MCF 10A (cell line): ENCODE measurements at regions of chr11 and their contacts with region 1.

Region 1: DNA sequence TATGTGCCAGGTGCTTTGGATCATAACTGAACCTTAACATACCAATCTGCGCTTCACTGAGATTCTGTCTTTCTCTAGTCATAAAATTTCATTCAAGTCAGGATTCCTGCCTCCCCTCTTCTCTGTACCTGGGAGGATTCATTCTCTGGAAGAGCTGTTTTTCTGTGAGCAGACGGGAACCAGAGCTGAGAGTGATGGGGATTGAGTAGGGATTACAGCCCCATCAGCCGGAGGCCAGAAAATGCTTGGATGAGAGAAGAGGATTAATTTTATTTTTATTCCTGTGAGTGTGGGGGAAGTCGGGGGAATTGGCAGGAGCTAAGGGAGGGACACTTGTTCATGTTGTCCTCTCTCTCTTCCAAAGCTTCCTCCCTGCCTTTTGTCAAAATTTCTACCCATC is 4.7 kb downstream of the STX3 start:
- DNase-seq: no peak
- H3K4me3 Mint-ChIP-seq: no peak overlapping the region
- H3K27ac Mint-ChIP-seq: peak overlapping the region; percentile 54
- H3K4me1 Mint-ChIP-seq: peaks cover 15% of the 10 kb centered on the region
- H3K27me3 Mint-ChIP-seq: no peaks in the 10 kb centered on the region
- CTCF ChIP-seq: no peak

Region 2: DNA sequence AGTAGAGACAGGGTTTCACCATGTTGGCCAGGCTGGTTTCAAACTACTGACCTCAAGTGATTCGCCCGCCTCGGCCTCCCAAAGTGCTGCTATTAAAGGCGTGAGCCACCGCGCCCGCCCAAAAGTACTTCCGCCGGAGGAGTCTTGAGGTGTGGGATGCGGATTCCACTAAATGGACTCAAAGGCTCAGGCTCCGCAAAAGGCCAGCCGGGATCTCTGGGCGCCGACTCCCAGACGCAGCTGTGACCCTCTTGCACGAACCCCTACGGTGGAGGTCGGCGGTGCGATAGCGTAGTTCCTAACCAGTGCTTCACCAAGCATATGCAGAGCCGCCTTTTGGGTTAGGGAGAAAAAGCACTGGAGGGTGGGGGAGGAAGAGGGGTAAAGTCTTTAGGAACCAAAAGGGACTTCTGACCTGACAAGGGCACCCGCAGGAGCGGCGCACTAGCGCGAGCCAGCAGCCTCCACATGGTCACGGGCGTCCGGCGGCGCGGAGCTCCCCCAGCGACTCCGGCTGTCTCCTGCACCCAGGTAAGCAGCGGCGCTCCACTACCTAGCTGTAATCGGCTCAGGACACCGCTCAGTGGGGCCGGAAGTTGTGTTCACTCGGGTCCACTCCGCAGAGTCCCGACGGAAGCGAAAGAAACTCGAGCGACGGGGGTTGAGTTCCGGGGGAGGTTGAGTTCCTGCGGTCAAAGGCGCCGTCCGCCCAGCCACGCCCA is 50.5 kb after region 1 on chr11 and contains the start of gene MRPL16:
- CTCF ChIA-PET with region 1: interaction called, 160 read pairs
- POLR2A ChIA-PET with region 1: interaction called, 67 read pairs
- intact Hi-C with region 1: loop called (anchors 2 kb)
- DNase-seq: peak; percentile 90
- H3K4me3 Mint-ChIP-seq: peak within 1 kb of the TSS; percentile 90
- H3K27ac Mint-ChIP-seq: peak within 1 kb of the TSS; percentile 93
- H3K4me1 Mint-ChIP-seq: no peaks in the 10 kb centered on the region
- H3K27me3 Mint-ChIP-seq: no peaks in the 10 kb centered on the region
- CTCF ChIP-seq: no peak
- total RNA-seq, gene MRPL16: 31.8 and 39.8 TPM in 2 replicates

Region 3: DNA sequence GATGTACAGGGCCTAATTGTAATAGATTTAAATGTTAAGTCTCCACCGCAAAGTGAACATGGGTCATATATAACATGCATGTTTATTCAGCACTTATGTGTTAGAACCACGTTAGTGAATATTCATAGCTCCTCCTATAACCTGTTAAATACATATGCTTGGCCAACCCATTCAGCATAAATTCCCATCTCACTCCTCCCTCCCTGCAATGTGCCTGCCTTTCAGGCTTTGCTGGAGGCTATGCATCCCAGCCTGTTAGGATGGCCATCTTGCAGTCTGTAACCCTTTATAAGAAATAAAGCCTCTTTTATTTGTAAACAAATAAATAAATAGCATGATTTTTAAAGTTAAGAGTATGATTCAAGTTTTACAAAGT is 202.2 kb after region 1 on chr11:
- CTCF ChIA-PET with region 1: no interaction called
- POLR2A ChIA-PET with region 1: no interaction called
- intact Hi-C with region 1: no loop called
- DNase-seq: no peak
- H3K4me3 Mint-ChIP-seq: no peak overlapping the region
- H3K27ac Mint-ChIP-seq: no peak overlapping the region
- H3K4me1 Mint-ChIP-seq: no peaks in the 10 kb centered on the region
- H3K27me3 Mint-ChIP-seq: peaks cover 10% of the 10 kb centered on the region
- CTCF ChIP-seq: no peak